Activated naive CD4-positive, alpha-beta T cell treated with anti-CD3 and anti-CD28 coated beads, Interleukin-2, amount 10 ng/mL, durations not matched to agents 7 days and 5 days (primary cell): ENCODE measurements at regions of chr1 and their contacts with region 1.

Region 1: DNA sequence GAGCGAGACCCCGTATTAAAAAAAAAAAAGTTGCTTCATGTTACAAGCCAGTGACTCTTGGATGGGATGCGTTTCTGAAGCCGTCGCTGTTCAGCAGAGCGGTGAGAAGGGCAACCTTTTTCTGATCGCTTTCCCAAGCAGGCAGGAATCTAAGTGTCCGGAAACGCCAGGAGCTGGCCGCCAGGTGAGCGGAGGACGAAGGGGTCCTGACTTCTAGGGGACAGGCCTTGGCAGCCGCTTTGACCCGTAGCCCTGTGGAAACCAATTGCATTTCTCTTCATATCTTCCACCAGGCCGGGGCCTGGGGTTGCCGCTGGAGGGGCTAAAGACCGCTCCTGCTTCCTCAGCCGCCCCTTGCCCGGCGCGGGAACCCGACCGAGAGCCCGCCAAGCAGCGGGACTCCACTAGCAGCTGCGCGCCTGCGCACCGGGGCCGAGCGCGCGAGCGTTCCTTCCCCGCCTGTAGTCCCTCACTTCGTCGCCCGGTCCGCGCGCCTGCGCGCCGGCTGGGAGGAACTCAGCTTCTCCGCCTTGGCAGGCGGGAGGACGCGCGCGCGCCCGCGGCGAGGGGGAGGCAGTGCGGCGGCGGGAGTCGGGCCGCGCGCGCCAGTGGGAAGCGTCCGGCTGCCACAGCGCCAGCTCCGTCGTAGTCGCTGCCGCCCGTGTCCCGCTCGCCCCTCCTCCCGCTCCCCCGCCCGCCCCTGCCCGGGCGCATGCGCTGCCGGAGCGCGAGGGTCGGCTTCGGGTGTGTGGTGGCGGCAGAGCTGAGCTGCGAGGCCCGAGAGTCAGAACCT is at the start of gene SPEN:
- DNase-seq: peak; percentile 98
- H3K4me3 Mint-ChIP-seq: peak within 1 kb of the TSS; percentile 95
- H3K27ac Mint-ChIP-seq: peak within 1 kb of the TSS; percentile 97
- H3K4me1 Mint-ChIP-seq: peaks cover 54% of the 10 kb centered on the region
- H3K27me3 Mint-ChIP-seq: no peaks in the 10 kb centered on the region

Region 2: DNA sequence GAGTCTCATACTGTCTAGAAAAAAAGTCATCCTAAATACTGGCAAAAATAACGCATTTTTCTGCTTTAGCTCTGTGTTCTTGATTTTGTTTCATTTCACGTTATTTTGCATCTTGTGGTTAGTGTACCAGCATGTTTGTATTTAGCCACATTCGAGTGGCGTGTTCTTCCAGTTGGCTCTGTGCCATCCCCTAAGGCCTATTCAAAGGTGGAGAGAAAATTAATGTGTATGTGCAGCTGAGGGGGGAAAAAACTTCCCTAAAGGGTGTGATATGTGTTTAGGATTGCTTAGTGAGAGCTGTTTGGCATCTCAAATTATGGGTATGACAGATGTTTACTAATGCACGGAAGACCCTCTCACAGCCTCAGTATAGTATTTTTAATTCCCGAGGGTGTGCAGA is 308.5 kb before region 1 on chr1:
- CTCF ChIA-PET with region 1: no interaction called
- DNase-seq: no peak
- H3K4me3 Mint-ChIP-seq: no peak overlapping the region
- H3K27ac Mint-ChIP-seq: peak overlapping the region; percentile 55
- H3K4me1 Mint-ChIP-seq: no peaks in the 10 kb centered on the region
- H3K27me3 Mint-ChIP-seq: no peaks in the 10 kb centered on the region

Region 3: DNA sequence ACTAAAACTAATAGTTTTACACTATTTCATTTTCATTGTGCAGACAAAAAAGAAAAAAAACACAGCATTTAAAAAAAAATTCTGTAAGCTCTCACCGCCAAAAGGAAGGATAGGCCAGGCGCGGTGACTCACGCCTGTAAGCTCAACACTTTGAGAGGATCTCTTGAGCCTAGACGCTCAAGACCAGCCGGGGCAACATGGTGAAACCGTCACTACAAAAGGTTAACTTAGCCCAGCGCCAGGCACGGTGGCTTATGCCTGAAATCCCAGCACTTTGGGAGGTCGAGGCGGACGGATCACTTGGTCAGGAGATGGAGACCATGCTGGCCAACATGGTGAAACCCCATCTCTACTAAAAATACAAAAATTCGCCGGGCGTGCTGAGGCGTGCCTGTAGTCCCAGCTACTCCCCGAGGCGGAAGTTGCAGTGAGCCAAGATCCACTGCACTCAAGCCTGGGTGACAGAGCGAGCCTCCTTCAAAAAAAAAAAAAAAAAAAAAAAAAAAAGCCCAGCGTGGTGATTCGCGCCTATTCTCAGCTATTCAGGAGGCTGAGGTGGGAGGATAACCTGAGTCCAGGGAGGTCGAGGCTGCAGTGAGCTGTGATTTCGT is 14.1 kb before region 1 on chr1:
- CTCF ChIA-PET with region 1: interaction called, 12 read pairs
- DNase-seq: peak; percentile 72
- H3K4me3 Mint-ChIP-seq: peak overlapping the region; percentile 85
- H3K27ac Mint-ChIP-seq: peak overlapping the region; percentile 98
- H3K4me1 Mint-ChIP-seq: peaks cover 50% of the 10 kb centered on the region
- H3K27me3 Mint-ChIP-seq: peaks cover 11% of the 10 kb centered on the region

Region 4: GRCh38 chr1:15885701-15886610 is 38.7 kb after region 1 on chr1:
- CTCF ChIA-PET with region 1: no interaction called
- DNase-seq: peak; percentile 35
- H3K4me3 Mint-ChIP-seq: no peak overlapping the region
- H3K27ac Mint-ChIP-seq: no peak overlapping the region
- H3K4me1 Mint-ChIP-seq: peaks cover 40% of the 10 kb centered on the region
- H3K27me3 Mint-ChIP-seq: no peaks in the 10 kb centered on the region

Region 5: DNA sequence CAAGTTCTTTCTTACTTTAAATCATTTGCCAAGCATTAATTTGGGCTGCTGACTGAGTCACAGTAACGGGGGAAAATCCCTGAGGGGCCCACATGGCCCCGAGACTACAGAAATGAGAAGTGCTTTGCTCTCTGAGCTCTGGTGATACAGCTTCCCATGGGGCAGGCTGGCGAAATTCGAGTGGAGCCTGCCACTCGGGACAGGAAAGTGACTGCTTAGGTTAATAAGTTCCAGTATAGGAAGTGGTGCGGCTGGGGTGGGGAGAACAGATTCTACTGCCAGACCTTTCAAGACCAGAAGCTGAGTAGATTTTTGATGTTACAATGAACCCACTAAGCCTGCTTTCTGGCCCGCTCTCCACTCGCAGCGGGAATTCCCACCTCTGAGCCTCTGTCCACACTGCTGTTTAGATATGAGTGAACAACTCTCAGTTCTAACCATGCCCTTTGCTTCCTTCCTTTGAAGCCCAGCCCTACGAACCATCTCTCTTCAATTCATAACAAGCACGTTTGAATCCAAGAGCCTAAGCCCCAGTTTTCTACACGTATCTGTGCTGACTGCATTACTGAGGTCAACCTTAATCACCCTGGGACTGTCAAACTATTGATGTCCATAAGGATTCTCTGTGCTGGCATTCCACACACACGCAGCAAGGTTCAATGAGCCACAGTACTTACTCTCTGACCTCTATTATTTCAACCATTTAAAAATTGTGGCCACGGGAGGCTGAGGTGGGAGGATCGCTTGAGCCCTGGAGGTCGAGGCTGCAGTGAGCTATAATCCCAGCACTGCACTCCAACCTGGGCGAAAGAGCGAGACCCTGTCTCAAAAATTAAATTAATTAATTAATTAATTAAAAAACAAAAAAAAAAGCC is 119.0 kb after region 1 on chr1:
- CTCF ChIA-PET with region 1: no interaction called
- DNase-seq: peak; percentile 69
- H3K4me3 Mint-ChIP-seq: peak overlapping the region; percentile 39
- H3K27ac Mint-ChIP-seq: peak overlapping the region; percentile 86
- H3K4me1 Mint-ChIP-seq: peaks cover 56% of the 10 kb centered on the region
- H3K27me3 Mint-ChIP-seq: no peaks in the 10 kb centered on the region